CD8-positive, alpha-beta T cell (primary cell): ENCODE measurements at regions of chr10 and their contacts with region 1.

Region 1: GRCh38 chr10:62816331-62817120 is at the start of gene EGR2:
- DNase-seq: peak; percentile 90 to 98 (median 95)
- ATAC-seq: peak; percentile 82
- H3K4me3 ChIP-seq: peak within 1 kb of the TSS; percentile 74 to 85
- H3K4me3 Mint-ChIP-seq: peak within 1 kb of the TSS; percentile 98
- H3K27ac ChIP-seq: peak within 1 kb of the TSS; percentile 73 to 80
- H3K27ac Mint-ChIP-seq: peak within 1 kb of the TSS; percentile 98
- H3K4me1 ChIP-seq: peaks cover 35% of the 10 kb centered on the region
- H3K4me1 Mint-ChIP-seq: peaks cover 45% of the 10 kb centered on the region
- H3K27me3 ChIP-seq: peaks cover 6 to 10% of the 10 kb centered on the region in 2 experiments
- H3K27me3 Mint-ChIP-seq: peaks cover 27% of the 10 kb centered on the region
- CTCF ChIP-seq: no peak
- total RNA-seq, gene EGR2: 5.6 to 6.1 TPM

Region 2: DNA sequence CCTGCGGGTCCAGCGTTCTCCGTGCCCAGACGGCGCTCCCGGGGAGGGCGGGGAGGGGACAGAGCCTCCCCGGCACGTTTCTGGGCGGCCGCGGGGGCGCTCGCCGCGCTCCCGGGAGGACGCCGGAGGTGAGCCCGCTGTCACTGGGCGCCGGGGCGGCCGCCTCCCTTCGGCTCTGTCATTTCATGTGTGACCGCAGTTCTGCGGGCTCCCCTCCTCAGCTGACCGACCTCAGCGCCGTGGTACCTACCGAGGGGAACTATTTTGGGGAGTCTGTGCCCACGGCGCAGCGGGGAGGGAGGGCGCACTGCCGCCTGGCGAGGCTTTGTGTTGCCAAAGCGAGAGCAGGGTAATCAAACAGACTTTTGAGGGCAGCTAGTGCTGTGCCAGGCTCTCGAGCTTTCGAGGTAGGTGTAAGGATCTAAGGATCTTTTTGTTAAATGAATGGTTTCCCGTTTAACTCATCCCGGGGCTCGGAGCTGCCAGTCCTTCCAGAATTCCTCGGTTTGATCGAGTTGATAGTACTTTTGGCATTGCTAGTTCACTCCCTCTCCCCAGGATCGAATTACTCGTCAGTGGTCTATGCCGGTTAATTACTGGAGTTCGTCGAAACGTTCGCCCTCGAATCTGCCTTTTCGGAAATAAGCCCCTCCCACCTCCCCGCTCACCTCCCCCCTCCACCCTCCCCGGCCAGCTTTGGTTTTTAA is 913.2 kb before region 1 on chr10:
- CTCF ChIA-PET with region 1: no interaction called
- POLR2A ChIA-PET with region 1: no interaction called
- intact Hi-C with region 1: loop called (anchors 2 to 5 kb)
- DNase-seq: peak; percentile 39 to 83 (median 67)
- ATAC-seq: peak; percentile 41
- H3K4me3 ChIP-seq: peak overlapping the region; percentile 91 to 93
- H3K4me3 Mint-ChIP-seq: peak overlapping the region; percentile 84
- H3K27ac ChIP-seq: peak overlapping the region; percentile 94 to 95
- H3K27ac Mint-ChIP-seq: peak overlapping the region; percentile 97
- H3K4me1 ChIP-seq: peaks cover 24% of the 10 kb centered on the region
- H3K4me1 Mint-ChIP-seq: peaks cover 44% of the 10 kb centered on the region
- H3K27me3 ChIP-seq: no peaks in the 10 kb centered on the region
- H3K27me3 Mint-ChIP-seq: no peaks in the 10 kb centered on the region
- CTCF ChIP-seq: peak; percentile 22

Region 3: DNA sequence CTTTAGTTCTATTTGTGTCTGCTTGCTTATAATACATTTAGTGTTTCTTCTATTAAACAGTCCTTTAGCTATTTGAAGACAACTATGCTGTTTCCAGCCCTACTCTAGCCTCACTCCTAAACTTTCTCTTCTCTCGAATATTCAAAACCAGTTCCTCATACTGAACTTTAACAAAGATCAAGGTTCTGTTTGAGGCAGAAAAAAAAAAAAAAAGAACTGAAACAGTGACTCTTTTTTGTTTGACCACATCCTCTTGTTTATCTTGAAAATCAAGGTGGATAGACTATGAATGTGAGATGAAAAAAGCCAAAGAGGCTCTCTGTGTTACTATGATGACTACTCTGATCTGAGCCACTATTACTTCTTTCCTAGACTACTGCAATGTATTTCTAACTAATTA is 288.1 kb before region 1 on chr10:
- CTCF ChIA-PET with region 1: interaction called, 4 read pairs
- POLR2A ChIA-PET with region 1: interaction called, 3 read pairs
- intact Hi-C with region 1: loop called in 1 of 2 experiments (anchors 2 kb)
- DNase-seq: peak in 2 of 9 experiments; percentile 57 to 75
- ATAC-seq: peak; percentile 88
- H3K4me3 ChIP-seq: peak overlapping the region in 1 of 2 experiments; percentile 14
- H3K4me3 Mint-ChIP-seq: peak overlapping the region; percentile 40
- H3K27ac ChIP-seq: no peak overlapping the region
- H3K27ac Mint-ChIP-seq: peak overlapping the region; percentile 70
- H3K4me1 ChIP-seq: peaks cover 43% of the 10 kb centered on the region
- H3K4me1 Mint-ChIP-seq: peaks cover 44% of the 10 kb centered on the region
- H3K27me3 ChIP-seq: no peaks in the 10 kb centered on the region
- H3K27me3 Mint-ChIP-seq: no peaks in the 10 kb centered on the region
- CTCF ChIP-seq: no peak

Region 4: DNA sequence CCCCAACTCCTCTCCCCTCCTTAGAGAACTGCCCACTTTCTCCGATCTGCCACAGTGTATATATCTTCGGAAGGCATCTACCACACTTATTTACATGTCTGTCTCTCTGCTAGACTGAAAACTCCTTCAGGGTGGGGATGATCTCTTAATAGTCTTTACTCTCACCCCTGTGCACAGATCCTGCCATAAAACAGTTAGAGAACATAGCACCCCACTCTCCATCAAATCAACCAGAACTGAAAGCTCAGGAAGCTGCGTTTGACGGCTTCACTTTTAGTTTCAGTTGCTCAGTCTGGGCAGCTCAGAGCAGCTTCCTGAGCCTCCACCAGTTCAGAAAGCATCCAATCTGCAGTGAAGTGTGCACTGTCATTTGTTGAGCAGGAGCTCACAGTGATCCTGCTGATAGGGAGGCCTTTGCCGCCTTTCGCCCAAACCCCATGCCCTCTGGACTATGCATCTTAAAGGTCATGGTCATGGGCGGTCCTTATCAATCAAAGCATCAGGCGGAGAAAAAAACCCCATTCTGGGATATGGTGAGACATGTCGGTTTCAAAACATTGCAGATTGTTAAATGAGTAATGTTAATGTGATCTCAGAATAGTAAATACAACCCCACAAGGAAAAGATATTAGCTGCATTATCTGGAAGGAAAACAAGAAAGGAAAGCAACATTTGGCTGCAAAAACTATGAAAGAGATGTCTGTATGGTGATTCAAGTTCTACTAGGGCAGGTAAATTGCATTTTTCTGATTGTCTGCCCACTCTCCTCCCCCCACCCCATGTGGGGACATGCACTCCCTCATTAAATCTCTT is 179.1 kb before region 1 on chr10:
- CTCF ChIA-PET with region 1: interaction called, 32 read pairs
- POLR2A ChIA-PET with region 1: interaction called, 14 read pairs
- intact Hi-C with region 1: loop called (anchors 1 kb)
- DNase-seq: peak; percentile 25 to 90 (median 68)
- ATAC-seq: peak; percentile 84
- H3K4me3 ChIP-seq: peak overlapping the region; percentile 48
- H3K4me3 Mint-ChIP-seq: no peak overlapping the region
- H3K27ac ChIP-seq: peak overlapping the region; percentile 77 to 88
- H3K27ac Mint-ChIP-seq: no peak overlapping the region
- H3K4me1 ChIP-seq: peaks cover 28% of the 10 kb centered on the region
- H3K4me1 Mint-ChIP-seq: peaks cover 14% of the 10 kb centered on the region
- H3K27me3 ChIP-seq: no peaks in the 10 kb centered on the region
- H3K27me3 Mint-ChIP-seq: no peaks in the 10 kb centered on the region
- CTCF ChIP-seq: no peak

Region 5: DNA sequence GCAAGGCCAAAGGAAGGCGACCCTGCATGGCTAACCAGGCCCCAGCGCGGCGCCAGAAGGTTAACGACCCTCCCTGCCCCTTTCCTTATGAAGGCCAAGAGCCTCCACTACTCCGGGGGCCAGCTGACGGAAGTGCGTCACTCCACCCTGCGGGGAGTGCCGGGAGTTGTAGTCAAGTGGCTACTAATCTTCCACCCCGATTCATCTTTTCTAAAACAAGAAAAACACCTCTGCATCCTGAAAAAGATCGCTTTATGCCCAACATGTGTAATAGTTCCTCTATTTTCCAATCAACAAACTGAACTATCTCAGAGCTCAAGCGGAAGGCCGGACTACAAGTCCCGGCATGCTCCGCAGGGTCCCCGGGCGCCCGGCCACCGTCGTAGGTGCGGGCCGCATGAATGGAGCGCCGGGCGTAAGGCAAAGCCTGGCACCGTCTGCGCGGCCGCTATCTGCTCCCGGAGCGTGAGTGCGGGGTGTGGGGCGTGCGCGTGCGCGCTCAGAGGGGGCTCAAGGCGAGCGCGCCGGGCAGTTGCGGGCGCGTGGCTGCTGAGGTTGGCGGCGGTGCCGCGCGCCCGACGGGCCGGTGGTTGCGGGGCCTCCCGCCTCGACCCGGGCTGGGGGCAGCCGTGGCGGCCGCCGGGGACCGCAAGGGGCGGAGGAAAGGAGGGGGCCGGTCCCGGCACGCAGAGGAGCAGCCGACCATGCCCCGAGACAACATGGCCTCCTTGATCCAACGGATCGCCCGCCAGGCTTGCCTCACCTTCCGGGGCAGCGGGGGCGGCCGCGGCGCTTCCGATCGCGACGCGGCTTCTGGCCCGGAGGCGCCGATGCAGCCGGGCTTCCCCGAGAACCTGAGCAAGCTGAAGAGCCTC is 11.9 kb before region 1 on chr10 and contains the start of gene ADO:
- CTCF ChIA-PET with region 1: interaction called, 9 read pairs
- POLR2A ChIA-PET with region 1: interaction called, 45 read pairs
- intact Hi-C with region 1: loop called (anchors 1 kb)
- DNase-seq: peak; percentile 52 to 90 (median 78)
- ATAC-seq: peak; percentile 88
- H3K4me3 ChIP-seq: peak within 1 kb of the TSS; percentile 88 to 89
- H3K4me3 Mint-ChIP-seq: peak within 1 kb of the TSS; percentile 97
- H3K27ac ChIP-seq: peak within 1 kb of the TSS; percentile 76 to 98
- H3K27ac Mint-ChIP-seq: peak within 1 kb of the TSS; percentile 99
- H3K4me1 ChIP-seq: peaks cover 29% of the 10 kb centered on the region
- H3K4me1 Mint-ChIP-seq: peaks cover 40% of the 10 kb centered on the region
- H3K27me3 ChIP-seq: no peaks in the 10 kb centered on the region
- H3K27me3 Mint-ChIP-seq: no peaks in the 10 kb centered on the region
- CTCF ChIP-seq: no peak
- total RNA-seq, gene ADO: 12.7 to 13.1 TPM

Region 6: DNA sequence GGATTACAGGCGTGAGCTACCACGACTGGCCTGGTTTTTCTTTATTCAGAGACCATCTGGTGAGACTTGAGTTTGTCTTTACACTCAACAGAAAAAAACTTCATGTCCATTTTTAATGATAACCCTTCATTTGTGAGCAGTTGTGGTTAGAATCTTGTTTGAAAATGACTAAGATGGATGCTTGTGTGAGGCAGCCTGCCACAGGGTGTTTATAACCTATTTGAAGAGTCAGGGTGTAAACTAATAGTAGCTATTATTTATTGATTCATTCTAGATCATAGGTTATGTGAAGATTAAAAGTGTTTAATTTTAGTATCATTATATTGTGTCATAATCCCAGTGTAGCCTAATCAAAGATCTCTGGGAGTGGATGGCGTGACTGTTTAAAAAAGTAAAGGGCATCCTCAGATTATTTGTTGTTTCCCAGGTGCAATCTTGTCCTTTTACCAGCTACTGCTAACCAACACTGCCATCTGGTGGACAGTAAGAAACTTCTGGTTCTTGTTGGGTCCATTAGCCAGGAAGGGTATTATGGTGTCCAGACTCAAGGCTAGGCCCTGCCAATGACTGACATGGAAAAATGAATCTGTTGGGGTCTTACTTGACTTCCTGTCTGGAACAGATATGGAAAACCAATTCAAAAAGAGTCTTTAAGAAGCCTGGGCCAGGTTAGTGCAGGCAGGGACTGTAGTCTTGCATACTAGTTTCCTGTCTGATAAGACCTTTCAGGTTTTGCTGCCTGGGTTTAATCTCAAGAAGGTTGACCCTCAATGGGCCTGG is 341.5 kb after region 1 on chr10:
- CTCF ChIA-PET with region 1: interaction called, 17 read pairs
- POLR2A ChIA-PET with region 1: no interaction called
- intact Hi-C with region 1: loop called in 1 of 2 experiments (anchors 2 kb)
- DNase-seq: peak in 8 of 9 experiments; percentile 13 to 88 (median 48)
- ATAC-seq: peak; percentile 74
- H3K4me3 ChIP-seq: no peak overlapping the region
- H3K4me3 Mint-ChIP-seq: no peak overlapping the region
- H3K27ac ChIP-seq: no peak overlapping the region
- H3K27ac Mint-ChIP-seq: no peak overlapping the region
- H3K4me1 ChIP-seq: no peaks in the 10 kb centered on the region
- H3K4me1 Mint-ChIP-seq: peaks cover 11% of the 10 kb centered on the region
- H3K27me3 ChIP-seq: no peaks in the 10 kb centered on the region
- H3K27me3 Mint-ChIP-seq: no peaks in the 10 kb centered on the region
- CTCF ChIP-seq: peak; percentile 79